CD8-positive, alpha-beta T cell (primary cell): ENCODE measurements at regions of chr14 and their contacts with region 1.

Region 1: DNA sequence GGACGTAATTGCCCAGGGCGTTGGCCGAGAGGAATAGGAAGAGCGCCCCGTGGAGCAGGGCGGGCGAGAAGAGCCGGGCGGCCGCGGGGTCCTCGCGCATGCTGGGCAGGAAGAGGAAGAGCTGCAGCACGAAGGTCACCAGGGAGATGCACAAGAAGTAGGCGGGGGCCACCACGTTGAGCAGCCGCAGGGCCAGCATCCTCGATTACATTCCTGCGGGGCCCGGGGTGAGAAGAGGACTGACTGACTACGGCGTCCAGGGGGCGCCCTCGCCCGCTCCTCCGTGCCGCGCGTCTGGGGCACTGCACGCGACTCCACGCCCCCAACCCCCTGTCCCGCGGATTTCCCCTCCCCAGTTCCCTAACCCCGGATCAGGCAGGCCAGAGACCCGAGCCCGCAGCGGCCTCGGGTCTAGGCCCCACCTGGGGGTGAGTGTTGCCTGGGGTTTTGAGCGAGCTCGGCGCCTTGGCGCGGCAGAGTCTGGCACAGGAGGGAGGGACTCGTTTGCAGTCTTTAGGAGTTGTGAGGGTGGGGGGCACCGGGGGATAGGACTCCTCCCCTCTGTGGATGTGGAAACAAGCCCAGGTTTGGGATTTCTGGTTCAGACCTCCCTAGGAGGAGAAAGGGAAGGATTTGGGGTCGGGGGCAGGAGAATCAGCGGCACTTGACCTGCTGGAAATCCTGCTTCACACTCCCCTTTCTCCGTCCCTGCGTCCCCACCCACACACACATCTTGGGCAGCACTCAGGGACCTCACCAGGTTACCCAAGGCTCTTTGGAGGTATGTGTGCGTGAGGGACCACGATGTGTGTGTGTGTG is 1.8 kb downstream of the ZDHHC22 start:
- DNase-seq: peak in 5 of 9 experiments; percentile 26 to 45 (median 38)
- ATAC-seq: peak; percentile 52
- H3K4me3 ChIP-seq: no peak overlapping the region
- H3K4me3 Mint-ChIP-seq: peak overlapping the region; percentile 53
- H3K27ac ChIP-seq: no peak overlapping the region
- H3K27ac Mint-ChIP-seq: no peak overlapping the region
- H3K4me1 ChIP-seq: no peaks in the 10 kb centered on the region
- H3K4me1 Mint-ChIP-seq: peaks cover 27% of the 10 kb centered on the region
- H3K27me3 ChIP-seq: peaks cover 15 to 32% of the 10 kb centered on the region in 2 experiments
- H3K27me3 Mint-ChIP-seq: peaks cover 73% of the 10 kb centered on the region
- CTCF ChIP-seq: no peak

Region 2: DNA sequence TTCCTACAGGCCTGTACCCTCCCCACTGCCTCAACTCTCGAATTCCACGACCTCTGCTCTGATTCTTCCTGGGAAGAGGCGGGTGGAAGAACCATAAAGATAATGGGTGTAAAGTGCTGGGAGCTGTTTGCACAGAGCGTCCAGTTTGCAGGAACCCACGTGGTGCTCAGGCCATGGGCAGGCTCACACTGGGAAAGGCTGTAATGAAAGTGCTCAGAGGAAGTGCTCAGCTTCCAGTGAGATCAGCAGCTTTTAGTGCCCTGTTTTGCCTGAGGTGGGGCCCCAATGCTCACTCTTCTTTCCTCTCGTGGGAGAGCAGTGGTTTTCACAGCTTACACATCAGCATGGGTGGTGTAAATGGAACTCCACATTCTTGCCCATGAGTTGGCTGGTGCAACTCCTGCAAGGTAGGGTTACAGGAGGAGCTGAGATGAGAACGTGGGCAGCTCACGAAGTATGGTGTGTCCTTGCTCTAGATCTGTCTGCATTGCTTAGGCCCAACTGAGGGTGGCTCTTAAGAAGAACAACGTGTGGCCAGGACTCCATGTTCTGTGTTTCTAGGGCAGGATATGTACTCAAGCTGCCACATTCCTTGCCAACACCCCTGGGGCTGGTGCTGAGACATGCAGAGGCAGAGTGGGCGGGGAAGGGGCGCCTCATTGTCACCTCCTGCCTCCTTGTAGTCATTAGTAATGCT is 44.8 kb after region 1 on chr14:
- CTCF ChIA-PET with region 1: no interaction called
- POLR2A ChIA-PET with region 1: no interaction called
- intact Hi-C with region 1: no loop called
- DNase-seq: peak in 1 of 9 experiments; percentile 38
- ATAC-seq: no peak
- H3K4me3 ChIP-seq: no peak overlapping the region
- H3K4me3 Mint-ChIP-seq: no peak overlapping the region
- H3K27ac ChIP-seq: no peak overlapping the region
- H3K27ac Mint-ChIP-seq: no peak overlapping the region
- H3K4me1 ChIP-seq: peaks cover 11% of the 10 kb centered on the region
- H3K4me1 Mint-ChIP-seq: peaks cover 11% of the 10 kb centered on the region
- H3K27me3 ChIP-seq: no peaks in the 10 kb centered on the region
- H3K27me3 Mint-ChIP-seq: peaks cover 36% of the 10 kb centered on the region
- CTCF ChIP-seq: no peak

Region 3: DNA sequence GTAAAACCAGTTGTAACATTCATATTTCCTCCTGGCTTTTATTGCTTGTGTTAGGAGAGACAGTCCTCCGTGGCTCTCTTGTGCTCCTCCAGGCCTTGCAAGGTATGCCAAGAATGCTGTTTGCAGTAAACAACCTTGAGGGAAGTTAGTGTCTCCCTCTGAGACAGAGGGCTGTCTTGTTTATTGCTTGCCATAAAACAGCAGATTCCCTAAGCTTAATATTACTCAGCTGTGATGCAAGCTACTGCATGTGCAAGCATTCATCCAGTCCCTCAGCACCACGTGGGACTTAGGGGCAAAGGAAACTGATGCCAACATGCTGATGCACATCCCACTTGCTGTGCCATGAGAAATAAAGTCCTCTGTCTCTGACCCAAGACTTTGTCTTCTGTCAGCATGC is 174.3 kb after region 1 on chr14:
- CTCF ChIA-PET with region 1: interaction called, 6 read pairs
- POLR2A ChIA-PET with region 1: no interaction called
- intact Hi-C with region 1: loop called in 1 of 2 experiments (anchors 5 kb)
- DNase-seq: no peak
- ATAC-seq: no peak
- H3K4me3 ChIP-seq: no peak overlapping the region
- H3K4me3 Mint-ChIP-seq: no peak overlapping the region
- H3K27ac ChIP-seq: no peak overlapping the region
- H3K27ac Mint-ChIP-seq: no peak overlapping the region
- H3K4me1 ChIP-seq: no peaks in the 10 kb centered on the region
- H3K4me1 Mint-ChIP-seq: peaks cover 6% of the 10 kb centered on the region
- H3K27me3 ChIP-seq: no peaks in the 10 kb centered on the region
- H3K27me3 Mint-ChIP-seq: no peaks in the 10 kb centered on the region
- CTCF ChIP-seq: no peak

Region 4: GRCh38 chr14:77554207-77554606 is 414.5 kb after region 1 on chr14:
- CTCF ChIA-PET with region 1: no interaction called
- POLR2A ChIA-PET with region 1: no interaction called
- intact Hi-C with region 1: loop called in 1 of 2 experiments (anchors 5 kb)
- DNase-seq: peak in 1 of 9 experiments; percentile 14
- ATAC-seq: no peak
- H3K4me3 ChIP-seq: no peak overlapping the region
- H3K4me3 Mint-ChIP-seq: no peak overlapping the region
- H3K27ac ChIP-seq: peak overlapping the region in 1 of 2 experiments; percentile 2
- H3K27ac Mint-ChIP-seq: peak overlapping the region; percentile 43
- H3K4me1 ChIP-seq: no peaks in the 10 kb centered on the region
- H3K4me1 Mint-ChIP-seq: peaks cover 2% of the 10 kb centered on the region
- H3K27me3 ChIP-seq: no peaks in the 10 kb centered on the region
- H3K27me3 Mint-ChIP-seq: no peaks in the 10 kb centered on the region
- CTCF ChIP-seq: no peak